ENCODE measurements at regions of chr16 and their contacts with region 1.

Region 1: DNA sequence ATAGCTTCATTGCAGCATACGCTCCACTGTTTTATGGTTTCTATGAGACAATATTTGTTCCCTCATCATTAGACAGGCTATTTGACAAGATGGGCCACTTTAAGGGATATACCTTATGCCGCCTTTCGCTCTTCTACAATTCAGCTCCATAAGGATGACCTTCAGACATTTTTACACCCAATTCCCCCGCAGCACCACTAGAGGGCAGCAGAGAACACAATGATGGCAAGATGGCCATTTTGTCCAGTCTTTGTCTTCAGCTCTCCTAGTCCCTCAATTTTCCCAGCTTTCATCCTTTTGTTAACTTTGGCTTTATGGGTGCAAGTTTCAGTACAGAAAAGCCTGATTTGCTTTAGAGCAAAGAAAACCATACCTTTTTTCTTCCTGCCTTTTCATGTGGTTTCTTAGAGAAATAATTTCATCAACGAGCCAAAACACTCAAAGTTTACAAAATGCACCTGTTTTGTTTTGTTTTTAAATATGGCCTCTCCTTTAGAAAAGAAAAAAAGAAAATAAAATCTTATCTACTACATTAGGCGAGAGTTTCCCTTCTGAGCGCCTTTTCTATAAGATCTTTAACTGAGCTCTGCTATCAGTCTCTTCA is 355.3 kb downstream of the TOX3 start:
- DNase-seq: peak; percentile 60
- H3K4me3 ChIP-seq: no peak overlapping the region
- H3K27ac ChIP-seq: no peak overlapping the region
- H3K4me1 ChIP-seq: no peaks in the 10 kb centered on the region
- H3K27me3 ChIP-seq: no peaks in the 10 kb centered on the region
- CTCF ChIP-seq: peak; percentile 86 to 88
- POLR2A ChIP-seq: no peak

Region 2: GRCh38 chr16:52203096-52203495 is 11.5 kb after region 1 on chr16:
- CTCF ChIA-PET with region 1: interaction called, 17 read pairs
- POLR2A ChIA-PET with region 1: no interaction called
- dilution Hi-C with region 1: no loop called
- intact Hi-C with region 1: no loop called
- DNase-seq: no peak
- H3K4me3 ChIP-seq: no peak overlapping the region
- H3K27ac ChIP-seq: no peak overlapping the region
- H3K4me1 ChIP-seq: no peaks in the 10 kb centered on the region
- H3K27me3 ChIP-seq: no peaks in the 10 kb centered on the region
- CTCF ChIP-seq: no peak
- POLR2A ChIP-seq: no peak

Region 3: GRCh38 chr16:52912565-52913173 is 721.0 kb after region 1 on chr16:
- CTCF ChIA-PET with region 1: interaction called, 113 read pairs
- POLR2A ChIA-PET with region 1: no interaction called
- dilution Hi-C with region 1: no loop called
- intact Hi-C with region 1: no loop called
- DNase-seq: peak; percentile 48
- H3K4me3 ChIP-seq: no peak overlapping the region
- H3K27ac ChIP-seq: no peak overlapping the region
- H3K4me1 ChIP-seq: no peaks in the 10 kb centered on the region
- H3K27me3 ChIP-seq: no peaks in the 10 kb centered on the region
- CTCF ChIP-seq: peak; percentile 56 to 68
- POLR2A ChIP-seq: no peak

Measured in endothelial cell of umbilical vein (primary cell).